HEK293 (cell line): ENCODE measurements at regions of chr15 and their contacts with region 1.

Region 1: DNA sequence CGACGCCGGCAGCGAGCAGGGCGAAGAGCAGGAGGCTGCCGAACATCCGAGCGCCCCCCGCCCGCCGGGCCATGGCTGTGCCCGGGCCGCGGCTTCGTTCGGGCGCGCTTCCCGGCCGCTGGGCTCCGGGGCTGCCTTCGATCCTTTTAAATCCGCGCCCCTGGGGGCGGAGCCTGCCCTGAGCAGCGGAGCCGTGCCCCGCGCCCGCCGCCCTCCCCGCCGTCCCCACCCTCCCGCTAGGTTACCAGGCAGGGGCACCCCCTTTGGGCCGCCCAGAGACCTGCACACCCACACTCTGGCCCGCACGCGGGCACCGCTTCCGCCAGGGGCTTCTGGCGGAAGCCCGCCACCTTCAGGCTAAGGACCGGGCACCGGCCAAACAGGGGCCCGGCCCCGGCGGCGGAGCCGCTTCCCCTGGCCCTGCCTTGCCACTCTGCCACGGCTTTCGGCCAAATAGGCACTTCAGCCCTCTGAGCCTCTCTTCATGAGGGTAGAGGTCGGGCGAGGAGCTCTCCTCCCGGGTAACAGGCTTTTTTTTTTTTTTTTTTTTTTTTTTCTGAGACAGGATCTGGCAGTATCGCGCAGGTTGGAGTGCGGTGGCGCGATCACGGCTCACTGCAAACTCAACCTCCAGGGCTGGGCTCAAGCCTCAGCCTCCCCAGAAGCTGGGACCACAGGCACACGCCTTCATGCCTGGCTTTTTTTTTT is at the start of gene NMB:
- H3K4me3 ChIP-seq: peak within 1 kb of the TSS; percentile 35
- H3K27ac ChIP-seq: peak within 1 kb of the TSS; percentile 46; the same call in 1 of the 2 replicates
- H3K4me1 ChIP-seq: peaks cover 14% of the 10 kb centered on the region
- CTCF ChIP-seq: peak; percentile 92

Region 2: DNA sequence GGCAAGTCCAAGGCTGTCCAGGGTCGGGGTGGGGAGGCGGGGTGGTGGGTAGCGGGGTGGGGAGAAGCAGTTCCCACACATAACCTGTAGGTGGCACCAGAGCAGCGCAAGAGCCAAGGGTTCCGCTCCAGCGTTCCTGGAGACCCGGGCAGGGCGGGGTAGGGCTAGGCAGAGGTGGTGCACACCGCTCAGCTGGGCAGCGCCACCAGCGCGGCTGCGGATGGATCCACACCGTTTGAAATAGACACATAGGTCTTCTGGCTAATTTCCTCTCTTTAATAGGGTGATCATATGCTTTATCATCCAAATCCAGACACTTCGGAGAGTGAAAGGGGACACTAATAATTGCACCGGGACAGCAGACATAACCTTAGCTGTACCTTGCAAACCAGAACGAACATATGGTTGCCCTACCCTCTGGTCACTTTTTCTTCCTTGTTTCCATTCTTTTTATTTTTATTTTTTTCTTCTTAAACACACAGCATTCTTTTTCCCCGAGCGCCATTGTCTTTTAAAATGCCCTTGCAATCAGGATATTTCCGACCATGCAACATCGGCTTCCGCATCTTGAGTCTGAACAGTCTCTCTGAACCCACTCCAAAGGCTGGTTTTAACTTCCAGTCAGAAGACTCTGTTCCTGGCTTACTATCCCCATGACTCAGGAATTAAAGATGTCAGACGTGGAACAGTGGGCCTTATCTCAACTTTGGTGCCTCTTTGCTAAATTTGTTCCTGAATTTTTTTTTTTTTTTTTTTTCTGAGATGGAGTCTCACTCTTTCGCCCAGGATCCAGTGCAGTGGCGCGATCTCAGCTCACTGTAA is 70.0 kb before region 1 on chr15:
- CTCF ChIA-PET with region 1: interaction called, 11 read pairs
- POLR2A ChIA-PET with region 1: no interaction called
- H3K4me3 ChIP-seq: peak overlapping the region; percentile 26
- H3K27ac ChIP-seq: no peak overlapping the region
- H3K4me1 ChIP-seq: no peaks in the 10 kb centered on the region
- CTCF ChIP-seq: peak; percentile 86

Region 3: DNA sequence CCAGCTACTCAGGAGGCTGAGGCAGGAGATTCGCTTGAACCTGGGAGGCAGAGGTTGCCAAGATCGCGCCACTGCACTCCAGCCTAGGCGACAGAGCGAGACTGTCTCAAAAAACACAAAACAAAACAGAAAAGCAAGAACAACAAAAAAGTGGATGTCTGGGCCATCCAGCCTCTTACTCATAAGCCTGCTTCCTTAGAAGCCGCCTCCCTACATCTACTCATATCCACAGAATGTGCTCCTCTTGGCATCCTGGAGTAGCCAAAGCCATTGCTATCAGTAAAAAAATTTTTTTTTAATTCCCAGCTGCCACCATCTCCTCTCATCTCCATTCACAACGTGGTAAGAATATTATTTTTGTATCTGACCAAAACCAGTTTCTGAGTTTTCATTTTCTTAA is 46.6 kb before region 1 on chr15:
- CTCF ChIA-PET with region 1: no interaction called
- POLR2A ChIA-PET with region 1: no interaction called
- H3K4me3 ChIP-seq: no peak overlapping the region
- H3K27ac ChIP-seq: 0 out of 2 replicates have a peak overlapping the region, but pooled peaks have one; percentile 1
- H3K4me1 ChIP-seq: no peaks in the 10 kb centered on the region
- CTCF ChIP-seq: no peak

Region 4: DNA sequence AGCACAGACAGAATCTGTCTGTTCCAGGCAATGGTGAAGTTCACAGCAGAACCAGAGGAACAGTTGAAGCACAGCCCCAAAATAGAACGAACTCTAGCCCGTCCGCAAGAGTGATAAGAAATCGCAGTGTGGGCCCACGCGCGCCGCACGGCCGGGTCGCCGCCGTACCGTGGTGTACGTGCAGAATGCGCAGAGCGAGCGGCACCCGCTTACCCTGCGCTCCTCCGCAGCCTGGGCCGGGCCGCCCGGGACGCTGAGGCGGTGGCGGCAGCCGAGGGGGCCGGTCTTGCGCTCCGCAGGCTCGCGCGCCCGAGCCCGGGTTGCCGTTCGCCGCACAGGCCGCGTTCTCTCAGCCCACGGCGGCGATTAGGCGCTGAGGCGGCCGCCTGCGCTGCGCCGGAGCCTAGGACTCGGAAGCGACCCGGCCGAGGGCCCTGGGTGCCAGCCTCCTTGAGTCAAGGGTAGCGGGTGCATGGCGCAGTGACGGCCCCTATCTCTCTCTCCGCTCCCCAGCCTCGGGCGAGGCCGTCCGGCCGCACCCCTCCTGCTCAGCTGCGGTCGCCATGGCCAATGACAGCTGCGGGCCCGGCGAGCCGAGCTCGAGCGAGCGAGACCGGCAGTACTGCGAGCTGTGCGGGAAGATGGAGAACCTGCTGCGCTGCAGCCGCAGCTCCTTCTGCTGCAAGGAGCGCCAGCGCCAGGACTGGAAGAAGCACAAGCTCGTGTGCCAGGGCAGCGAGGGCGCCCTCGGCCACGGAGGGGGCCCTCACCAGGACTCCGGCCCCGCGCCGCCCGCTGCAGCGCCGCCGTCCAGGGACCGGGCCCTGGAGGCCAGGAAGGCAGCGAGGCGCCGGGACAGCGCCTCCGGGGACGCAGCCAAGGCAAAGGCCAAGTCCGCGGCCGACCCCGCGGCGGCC is 24.7 kb before region 1 on chr15:
- CTCF ChIA-PET with region 1: interaction called, 9 read pairs
- POLR2A ChIA-PET with region 1: interaction called, 19 read pairs
- H3K4me3 ChIP-seq: peak overlapping the region; percentile 68
- H3K27ac ChIP-seq: peak overlapping the region; percentile 90
- H3K4me1 ChIP-seq: peaks cover 4% of the 10 kb centered on the region
- CTCF ChIP-seq: peak; percentile 36; the same call in 1 of the 2 replicates

Region 5: GRCh38 chr15:84643838-84644237 is 14.4 kb before region 1 on chr15:
- CTCF ChIA-PET with region 1: interaction called, 9 read pairs
- POLR2A ChIA-PET with region 1: interaction called, 22 read pairs
- H3K4me3 ChIP-seq: no peak overlapping the region
- H3K27ac ChIP-seq: no peak overlapping the region
- H3K4me1 ChIP-seq: no peaks in the 10 kb centered on the region
- CTCF ChIP-seq: no peak

Region 6: DNA sequence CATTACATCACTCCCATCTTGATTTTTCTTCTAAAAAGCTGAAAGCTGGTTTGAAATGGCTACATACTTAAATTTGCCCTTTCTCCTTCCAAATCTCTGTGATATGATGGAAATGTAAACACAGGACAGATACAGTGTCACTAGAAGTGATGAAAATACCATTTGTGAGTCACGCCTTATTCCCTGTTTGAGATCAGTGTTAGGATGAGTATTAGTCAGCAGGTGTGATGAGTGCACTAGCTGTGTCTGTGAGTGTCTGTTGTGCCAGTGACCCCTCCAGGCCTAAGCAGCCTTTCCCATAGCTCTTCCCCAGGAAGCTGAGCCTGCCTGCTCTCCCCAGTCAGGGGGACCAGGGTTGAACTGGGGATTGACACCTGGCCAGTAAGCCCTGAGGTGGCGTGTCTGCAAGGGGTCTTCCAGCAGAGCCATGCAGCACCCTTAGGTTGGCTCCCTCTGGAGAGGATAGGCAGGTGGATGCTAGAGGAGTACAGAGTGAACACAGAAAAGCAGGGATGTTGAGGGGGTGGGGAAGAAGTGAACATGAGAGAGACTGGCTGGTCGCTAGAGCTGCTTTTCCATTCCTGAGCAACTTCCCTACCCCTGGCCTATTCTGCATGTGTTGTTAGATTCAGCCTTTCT is 415.4 kb after region 1 on chr15:
- CTCF ChIA-PET with region 1: no interaction called
- POLR2A ChIA-PET with region 1: no interaction called
- H3K4me3 ChIP-seq: no peak overlapping the region
- H3K27ac ChIP-seq: no peak overlapping the region
- H3K4me1 ChIP-seq: no peaks in the 10 kb centered on the region
- CTCF ChIP-seq: no peak